ENCODE measurements at regions of chr3 and their contacts with region 1.

Region 1: GRCh38 chr3:170037463-170038433 is at the start of gene GPR160:
- DNase-seq: peak; percentile 67 to 85 (median 80)
- ATAC-seq: peak; percentile 82
- H3K4me3 ChIP-seq: peak within 1 kb of the TSS; percentile 88
- H3K4me3 Mint-ChIP-seq: peak within 1 kb of the TSS; percentile 86 to 93 (median 90)
- H3K27ac ChIP-seq: peak within 1 kb of the TSS; percentile 63
- H3K27ac Mint-ChIP-seq: peak within 1 kb of the TSS; percentile 33 to 92 (median 82)
- H3K4me1 ChIP-seq: peaks cover 15 to 16% of the 10 kb centered on the region in 2 donors
- H3K4me1 Mint-ChIP-seq: peaks cover 24 to 66% (median 49%) of the 10 kb centered on the region in 7 donors
- H3K27me3 ChIP-seq: no peaks in the 10 kb centered on the region
- H3K27me3 Mint-ChIP-seq: peaks cover 0 to 6% (median 0%) of the 10 kb centered on the region in 5 donors
- total RNA-seq, gene GPR160: 6.1 to 44.3 (median 8.7) TPM

Region 2: GRCh38 chr3:169772897-169773828 is 264.6 kb before region 1 on chr3 and contains the start of gene MYNN:
- CTCF ChIA-PET with region 1: interaction called, 3 read pairs
- POLR2A ChIA-PET with region 1: interaction called, 7 read pairs
- intact Hi-C with region 1: loop called in 1 of 2 experiments (anchors 1 kb)
- DNase-seq: peak; percentile 87 to 95 (median 93)
- ATAC-seq: peak; percentile 90
- H3K4me3 ChIP-seq: peak within 1 kb of the TSS; percentile 87
- H3K4me3 Mint-ChIP-seq: peak within 1 kb of the TSS; percentile 91 to 99 (median 97)
- H3K27ac ChIP-seq: peak within 1 kb of the TSS; percentile 100
- H3K27ac Mint-ChIP-seq: peak within 1 kb of the TSS; percentile 96 to 100 (median 99)
- H3K4me1 ChIP-seq: peaks cover 15 to 22% of the 10 kb centered on the region in 2 donors
- H3K4me1 Mint-ChIP-seq: peaks cover 18 to 69% (median 56%) of the 10 kb centered on the region in 7 donors
- H3K27me3 ChIP-seq: no peaks in the 10 kb centered on the region
- H3K27me3 Mint-ChIP-seq: peaks cover 0 to 5% (median 0%) of the 10 kb centered on the region in 5 donors
- total RNA-seq, gene MYNN: 16.2 to 20.8 (median 19.0) TPM

Region 3: DNA sequence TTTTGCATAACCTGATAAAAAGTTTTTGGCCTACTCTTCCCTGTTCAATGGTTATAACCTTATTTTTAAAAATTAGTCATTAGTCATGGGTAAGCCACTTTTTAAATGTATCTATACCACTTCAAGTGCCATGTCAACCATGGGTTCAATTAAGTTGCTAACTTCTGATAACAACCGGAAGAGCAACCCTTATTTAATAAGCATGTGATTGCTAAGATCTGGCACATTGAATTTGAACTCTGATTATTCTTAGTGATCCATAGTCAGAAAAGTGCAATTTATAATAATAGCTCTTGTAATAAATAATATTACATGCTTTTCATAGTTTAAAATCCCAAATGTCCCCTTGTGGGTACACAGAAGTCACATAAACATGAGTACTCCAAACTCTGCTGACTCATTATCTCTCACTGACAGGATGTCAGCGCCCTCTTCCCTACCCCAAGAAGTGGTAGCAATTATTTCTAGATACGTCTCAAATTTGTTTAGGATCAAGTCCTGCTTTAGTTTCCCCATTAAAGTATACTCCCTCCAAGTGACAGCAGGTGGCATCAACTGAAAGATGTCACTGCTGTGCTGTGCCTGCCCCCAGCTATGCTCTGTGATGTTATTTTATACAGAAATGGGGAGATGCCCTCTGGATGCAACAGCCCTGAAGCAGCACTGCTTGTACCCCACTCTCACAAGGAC is 107.8 kb before region 1 on chr3:
- CTCF ChIA-PET with region 1: interaction called, 4 read pairs
- POLR2A ChIA-PET with region 1: no interaction called
- intact Hi-C with region 1: loop called in 1 of 2 experiments (anchors 1 kb)
- DNase-seq: peak in 5 of 9 donors; percentile 7 to 24 (median 16)
- ATAC-seq: peak; percentile 68
- H3K4me3 ChIP-seq: no peak overlapping the region
- H3K4me3 Mint-ChIP-seq: no peak overlapping the region
- H3K27ac ChIP-seq: no peak overlapping the region
- H3K27ac Mint-ChIP-seq: no peak overlapping the region
- H3K4me1 ChIP-seq: no peaks in the 10 kb centered on the region
- H3K4me1 Mint-ChIP-seq: peaks cover 0 to 4% (median 0%) of the 10 kb centered on the region in 7 donors
- H3K27me3 ChIP-seq: no peaks in the 10 kb centered on the region
- H3K27me3 Mint-ChIP-seq: peaks cover 0 to 12% (median 4%) of the 10 kb centered on the region in 5 donors

Region 4: DNA sequence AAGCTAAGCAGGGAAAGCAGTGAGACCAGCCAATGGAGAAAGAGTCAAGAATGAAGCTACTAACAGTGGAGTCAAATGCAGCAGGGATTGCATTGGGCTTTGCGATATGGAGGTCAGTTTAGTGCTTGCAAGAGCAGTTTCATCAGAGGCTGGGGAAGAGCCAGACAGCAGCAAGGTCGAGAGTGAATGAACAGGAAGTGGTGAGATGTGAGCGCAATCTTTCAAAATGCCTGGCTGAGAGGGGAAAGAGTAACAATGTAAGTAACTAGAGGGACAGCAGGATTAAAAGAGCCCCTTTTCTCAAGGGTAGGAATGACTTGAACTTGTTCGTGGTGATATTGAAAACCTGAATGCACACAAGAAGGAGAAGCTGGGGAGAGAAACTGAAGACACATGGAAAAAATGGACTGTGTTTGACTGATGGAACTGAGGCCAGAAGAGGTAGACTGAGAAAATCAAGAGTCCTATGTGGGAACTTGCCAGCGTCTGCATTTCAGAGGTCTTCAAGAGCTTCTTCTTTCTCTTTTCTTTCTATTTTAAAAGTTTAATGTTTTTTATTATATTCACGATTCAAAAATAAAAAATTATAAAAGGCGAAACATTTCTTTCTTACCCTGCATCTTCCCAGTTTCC is 30.6 kb before region 1 on chr3:
- CTCF ChIA-PET with region 1: interaction called, 7 read pairs
- POLR2A ChIA-PET with region 1: interaction called, 13 read pairs
- intact Hi-C with region 1: loop called in 1 of 2 experiments (anchors 1 kb)
- DNase-seq: peak in 8 of 9 donors; percentile 27 to 61 (median 48)
- ATAC-seq: peak; percentile 88
- H3K4me3 ChIP-seq: no peak overlapping the region
- H3K4me3 Mint-ChIP-seq: peak overlapping the region; percentile 38 to 76 (median 64)
- H3K27ac ChIP-seq: peak overlapping the region; percentile 19
- H3K27ac Mint-ChIP-seq: peak overlapping the region; percentile 26 to 91 (median 78)
- H3K4me1 ChIP-seq: peaks cover 4 to 34% of the 10 kb centered on the region in 2 donors
- H3K4me1 Mint-ChIP-seq: peaks cover 32 to 64% (median 50%) of the 10 kb centered on the region in 7 donors
- H3K27me3 ChIP-seq: no peaks in the 10 kb centered on the region
- H3K27me3 Mint-ChIP-seq: peaks cover 0 to 2% (median 0%) of the 10 kb centered on the region in 5 donors

Region 5: GRCh38 chr3:170055209-170055608 is 17.5 kb after region 1 on chr3:
- CTCF ChIA-PET with region 1: no interaction called
- POLR2A ChIA-PET with region 1: interaction called, 15 read pairs
- intact Hi-C with region 1: loop called (anchors 1 kb)
- DNase-seq: no peak
- ATAC-seq: no peak
- H3K4me3 ChIP-seq: no peak overlapping the region
- H3K4me3 Mint-ChIP-seq: no peak overlapping the region
- H3K27ac ChIP-seq: no peak overlapping the region
- H3K27ac Mint-ChIP-seq: peak overlapping the region in 2 of 9 donors; percentile 29 to 42
- H3K4me1 ChIP-seq: peaks cover 0 to 7% of the 10 kb centered on the region in 2 donors
- H3K4me1 Mint-ChIP-seq: peaks cover 6 to 37% (median 23%) of the 10 kb centered on the region in 7 donors
- H3K27me3 ChIP-seq: no peaks in the 10 kb centered on the region
- H3K27me3 Mint-ChIP-seq: no peaks in the 10 kb centered on the region

Region 6: DNA sequence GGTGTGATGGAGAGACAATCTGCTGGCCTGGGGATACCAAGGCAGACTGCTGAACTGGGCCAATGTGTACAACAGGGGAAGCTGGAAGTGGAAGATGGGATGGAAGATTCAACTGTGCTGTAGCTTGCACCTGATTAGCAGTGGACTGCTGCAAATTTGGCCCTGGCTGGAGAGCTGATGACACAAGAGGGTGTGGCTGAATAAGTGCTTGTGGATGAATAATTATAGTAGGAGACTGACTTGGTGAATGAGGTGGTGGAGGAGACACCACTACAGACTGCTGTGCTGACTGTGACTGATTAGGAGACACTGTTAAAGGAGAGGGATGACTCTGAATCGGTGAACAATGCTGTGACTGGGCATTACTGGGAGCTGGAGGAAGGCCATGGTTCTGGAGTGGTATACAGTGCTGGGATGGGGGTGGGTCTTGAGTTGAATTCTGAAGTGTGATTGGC is 91.3 kb after region 1 on chr3:
- CTCF ChIA-PET with region 1: no interaction called
- POLR2A ChIA-PET with region 1: no interaction called
- intact Hi-C with region 1: no loop called
- DNase-seq: no peak
- ATAC-seq: peak; percentile 52
- H3K4me3 ChIP-seq: no peak overlapping the region
- H3K4me3 Mint-ChIP-seq: peak overlapping the region; percentile 53 to 89 (median 75)
- H3K27ac ChIP-seq: peak overlapping the region; percentile 40
- H3K27ac Mint-ChIP-seq: peak overlapping the region; percentile 50 to 88 (median 73)
- H3K4me1 ChIP-seq: peaks cover 0 to 9% of the 10 kb centered on the region in 2 donors
- H3K4me1 Mint-ChIP-seq: peaks cover 13 to 71% (median 42%) of the 10 kb centered on the region in 7 donors
- H3K27me3 ChIP-seq: no peaks in the 10 kb centered on the region
- H3K27me3 Mint-ChIP-seq: no peaks in the 10 kb centered on the region

Region 7: DNA sequence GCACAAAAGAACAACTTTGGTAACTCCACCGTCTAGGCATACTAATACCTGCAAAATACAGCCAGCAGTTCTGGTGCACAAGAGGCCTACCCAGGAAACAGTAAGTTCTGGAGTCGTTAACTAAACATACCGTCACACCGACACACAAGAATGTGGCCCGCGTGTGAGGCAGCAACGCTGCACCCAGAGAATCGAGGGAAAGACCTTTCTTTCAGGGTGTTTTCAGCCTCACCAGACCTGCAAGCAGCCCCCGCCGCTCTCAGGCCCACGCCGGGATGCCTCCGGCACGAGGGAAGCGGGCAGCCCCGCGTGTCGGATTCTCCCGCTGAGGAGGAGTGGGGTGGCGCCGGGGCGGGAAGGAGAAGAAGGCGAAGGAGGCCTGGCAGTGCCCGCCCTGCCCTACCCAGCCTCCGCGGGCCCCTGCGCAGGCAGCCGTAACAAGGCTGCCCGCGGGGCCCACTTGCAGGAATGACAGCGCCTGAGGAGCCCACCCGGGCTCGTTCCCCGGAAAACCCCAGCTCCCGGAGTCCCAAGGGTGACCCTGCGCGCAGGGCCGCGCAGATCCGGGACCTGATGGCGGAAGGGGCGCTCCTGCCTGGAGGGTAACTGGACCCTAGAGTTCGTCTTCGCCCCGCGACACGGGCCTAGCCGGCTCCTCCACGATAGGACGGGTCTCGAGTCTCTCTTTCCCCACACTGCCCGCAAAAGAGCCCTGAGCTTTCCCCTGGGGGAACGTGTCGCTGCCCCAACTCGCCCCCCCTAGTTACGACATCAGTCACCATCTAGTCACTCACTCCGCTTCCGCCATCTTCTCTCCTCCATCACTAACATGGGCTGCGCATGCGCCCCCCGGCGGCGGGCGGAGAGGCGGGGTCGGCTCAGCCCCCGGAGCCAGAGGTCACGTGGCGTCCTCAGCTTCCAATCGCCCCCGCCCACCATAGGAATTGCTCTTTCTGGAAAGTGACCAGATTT is 143.4 kb after region 1 on chr3 and contains the start of gene PHC3:
- CTCF ChIA-PET with region 1: no interaction called
- POLR2A ChIA-PET with region 1: interaction called, 3 read pairs
- intact Hi-C with region 1: loop called (anchors 2 kb)
- DNase-seq: peak; percentile 88 to 95 (median 92)
- ATAC-seq: peak; percentile 86
- H3K4me3 ChIP-seq: peak within 1 kb of the TSS; percentile 93
- H3K4me3 Mint-ChIP-seq: peak within 1 kb of the TSS; percentile 88 to 100 (median 99)
- H3K27ac ChIP-seq: peak within 1 kb of the TSS; percentile 98
- H3K27ac Mint-ChIP-seq: peak within 1 kb of the TSS; percentile 96 to 100 (median 100)
- H3K4me1 ChIP-seq: peaks cover 19 to 39% of the 10 kb centered on the region in 2 donors
- H3K4me1 Mint-ChIP-seq: peaks cover 19 to 40% (median 33%) of the 10 kb centered on the region in 7 donors
- H3K27me3 ChIP-seq: no peaks in the 10 kb centered on the region
- H3K27me3 Mint-ChIP-seq: peaks cover 0 to 2% (median 0%) of the 10 kb centered on the region in 5 donors
- total RNA-seq, gene PHC3: 78.9 to 215 (median 158) TPM

Region 8: GRCh38 chr3:170908235-170909116 is 870.7 kb after region 1 on chr3 and contains the start of gene EIF5A2:
- CTCF ChIA-PET with region 1: no interaction called
- POLR2A ChIA-PET with region 1: no interaction called
- intact Hi-C with region 1: loop called in 1 of 2 experiments (anchors 10 kb)
- DNase-seq: peak; percentile 87 to 97 (median 94)
- ATAC-seq: peak; percentile 98
- H3K4me3 ChIP-seq: peak within 1 kb of the TSS; percentile 50
- H3K4me3 Mint-ChIP-seq: peak within 1 kb of the TSS; percentile 90 to 98 (median 96)
- H3K27ac ChIP-seq: peak within 1 kb of the TSS; percentile 68
- H3K27ac Mint-ChIP-seq: peak within 1 kb of the TSS; percentile 89 to 96 (median 94)
- H3K4me1 ChIP-seq: peaks cover 15 to 16% of the 10 kb centered on the region in 2 donors
- H3K4me1 Mint-ChIP-seq: peaks cover 0 to 31% (median 22%) of the 10 kb centered on the region in 7 donors
- H3K27me3 ChIP-seq: no peaks in the 10 kb centered on the region
- H3K27me3 Mint-ChIP-seq: peaks cover 0 to 19% (median 0%) of the 10 kb centered on the region in 5 donors
- total RNA-seq, gene EIF5A2: 5.5 to 9.8 (median 7.4) TPM

Measured in naive thymus-derived CD4-positive, alpha-beta T cell (primary cell).